ENCODE measurements at regions of chr19 and their contacts with region 1.

Region 1: GRCh38 chr19:17938092-17938845 is 5.5 kb downstream of the CCDC124 start:
- DNase-seq: peak; percentile 79 to 85 (median 82)
- ATAC-seq: peak; percentile 89
- H3K4me3 ChIP-seq: no peak overlapping the region
- H3K27ac ChIP-seq: no peak overlapping the region
- H3K4me1 ChIP-seq: peaks cover 13% of the 10 kb centered on the region
- H3K27me3 ChIP-seq: no peaks in the 10 kb centered on the region
- CTCF ChIP-seq: peak; percentile 87 to 97 (median 89)
- POLR2A ChIP-seq: no peak

Region 2: DNA sequence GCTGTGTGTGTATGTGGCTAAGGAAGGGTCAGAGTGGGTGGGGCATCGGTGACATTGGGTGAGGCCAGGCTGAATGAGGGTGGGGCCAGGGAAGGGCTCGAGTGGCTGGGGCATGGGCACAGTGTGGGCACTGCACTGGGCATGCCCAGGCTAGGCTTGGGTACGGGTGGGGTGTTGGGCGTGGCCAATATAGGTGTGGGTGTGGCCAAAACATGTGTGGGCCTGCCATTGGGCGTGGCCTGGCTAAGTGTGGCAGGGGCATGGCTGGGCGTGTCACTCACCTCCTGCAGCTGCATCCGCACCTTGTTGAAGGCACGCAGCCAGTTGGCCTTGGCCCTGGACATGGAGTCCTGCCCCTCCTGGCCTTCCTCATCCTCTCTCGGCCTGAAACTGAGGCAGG is 283.3 kb before region 1 on chr19:
- intact Hi-C with region 1: no loop called
- DNase-seq: no peak
- ATAC-seq: peak; percentile 18
- H3K4me3 ChIP-seq: no peak overlapping the region
- H3K27ac ChIP-seq: no peak overlapping the region
- H3K4me1 ChIP-seq: no peaks in the 10 kb centered on the region
- H3K27me3 ChIP-seq: no peaks in the 10 kb centered on the region
- CTCF ChIP-seq: no peak
- POLR2A ChIP-seq: no peak

Region 3: DNA sequence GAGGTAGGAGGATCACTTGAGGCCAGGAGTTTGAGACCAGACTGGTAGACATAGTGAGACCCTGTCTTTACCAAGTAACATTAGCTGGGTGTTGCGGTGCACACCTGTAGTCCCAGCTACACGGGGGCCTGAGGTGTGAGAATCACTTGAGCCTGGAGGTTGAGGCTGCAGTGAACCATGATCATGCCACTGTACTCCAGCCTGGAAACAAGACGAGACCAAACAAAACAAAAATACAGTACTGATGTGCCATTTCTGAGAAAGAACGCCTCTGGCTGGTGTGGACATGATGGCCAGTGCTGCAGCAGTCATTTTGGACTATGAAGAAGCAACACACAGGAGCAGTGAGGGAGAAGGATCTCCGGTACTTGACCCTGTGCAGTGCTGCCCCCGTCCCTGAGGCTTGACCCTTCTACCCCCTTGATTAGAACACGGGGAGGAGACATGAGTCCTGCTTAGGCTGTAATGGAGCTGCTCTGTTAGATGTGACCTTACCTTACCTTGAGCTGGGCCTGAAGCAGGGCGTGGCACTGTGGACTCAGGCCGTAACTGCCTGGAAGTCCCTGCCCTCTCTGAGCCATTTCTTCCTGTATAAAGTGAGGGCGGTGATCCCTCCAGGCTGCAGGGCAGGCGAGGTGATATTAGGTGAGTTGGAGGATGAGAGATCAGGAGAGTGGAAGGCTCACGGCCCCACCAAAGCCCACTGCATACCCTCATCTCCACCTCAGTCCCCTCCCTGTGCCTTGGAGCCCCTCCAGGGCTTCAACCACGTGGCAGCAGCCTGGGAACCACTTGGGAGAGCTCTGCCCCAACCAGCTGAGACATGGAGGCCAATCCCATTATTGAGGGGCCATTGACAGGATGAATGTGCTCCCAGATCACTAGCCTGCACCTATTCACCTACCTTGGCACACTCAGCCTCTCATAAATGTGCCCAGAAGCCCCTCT is 72.6 kb before region 1 on chr19:
- intact Hi-C with region 1: loop called (anchors 5 kb)
- DNase-seq: no peak
- ATAC-seq: peak; percentile 28
- H3K4me3 ChIP-seq: no peak overlapping the region
- H3K27ac ChIP-seq: no peak overlapping the region
- H3K4me1 ChIP-seq: peaks cover 30% of the 10 kb centered on the region
- H3K27me3 ChIP-seq: peaks cover 0 to 13% of the 10 kb centered on the region in 2 donors
- CTCF ChIP-seq: no peak
- POLR2A ChIP-seq: no peak